ENCODE measurements at regions of chr20 and their contacts with region 1.

Region 1: GRCh38 chr20:7285918-7286556 is 518.6 kb downstream of the BMP2 start:
- DNase-seq: peak; percentile 62
- ATAC-seq: peak; percentile 88
- H3K4me3 Mint-ChIP-seq: no peak overlapping the region
- H3K27ac Mint-ChIP-seq: no peak overlapping the region
- H3K4me1 Mint-ChIP-seq: peaks cover 2% of the 10 kb centered on the region
- H3K27me3 Mint-ChIP-seq: no peaks in the 10 kb centered on the region
- CTCF ChIP-seq: peak; percentile 62

Region 2: DNA sequence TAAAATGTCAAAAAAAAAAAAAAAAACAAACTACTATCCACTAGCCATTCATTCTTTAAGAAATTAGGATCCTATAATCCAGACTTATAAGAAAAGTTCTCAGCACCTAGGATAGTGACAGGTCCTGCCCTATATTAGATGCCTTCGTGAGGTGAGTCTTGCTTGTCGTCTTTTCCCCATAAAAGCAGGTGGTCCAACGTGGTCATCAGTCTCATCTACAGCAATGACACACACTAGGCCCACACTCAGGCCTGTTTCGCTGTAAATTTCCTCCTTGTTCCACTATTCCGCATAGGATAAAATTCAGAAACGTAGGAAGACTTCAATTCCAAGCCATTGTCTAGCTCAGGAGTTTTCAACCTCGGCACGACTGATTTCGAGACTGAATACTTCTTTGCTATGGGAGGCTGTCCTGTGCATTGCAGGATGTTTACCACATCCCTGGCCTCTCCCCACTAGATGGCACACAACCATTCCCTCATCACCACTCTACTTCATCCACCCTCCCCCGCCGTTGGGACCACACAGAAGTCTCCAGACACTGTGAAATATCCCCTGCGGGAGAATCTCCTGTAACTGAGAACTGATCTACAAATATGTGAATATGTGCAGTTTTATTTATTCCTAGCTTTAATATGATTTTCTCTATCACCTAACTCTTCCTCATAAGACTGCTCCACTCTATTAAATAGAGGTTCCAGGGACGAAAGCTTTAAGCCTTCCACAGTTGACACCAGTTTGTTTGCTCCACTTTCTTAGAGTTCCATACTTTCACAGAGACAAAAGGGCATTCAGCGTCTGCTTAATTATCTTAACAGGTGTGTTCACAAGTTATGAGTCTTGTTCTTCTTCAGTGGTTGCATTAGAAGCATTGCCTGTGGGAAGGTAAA is 172.2 kb before region 1 on chr20:
- CTCF ChIA-PET with region 1: interaction called, 25 read pairs
- POLR2A ChIA-PET with region 1: no interaction called
- DNase-seq: peak; percentile 75
- ATAC-seq: peak; percentile 99
- H3K4me3 Mint-ChIP-seq: peak overlapping the region; percentile 6; the same call in 1 of the 2 replicates
- H3K27ac Mint-ChIP-seq: peak overlapping the region; percentile 21; the same call in 1 of the 2 replicates
- H3K4me1 Mint-ChIP-seq: peaks cover 25% of the 10 kb centered on the region
- H3K27me3 Mint-ChIP-seq: no peaks in the 10 kb centered on the region
- CTCF ChIP-seq: no peak

Region 3: GRCh38 chr20:7248281-7249201 is 37.5 kb before region 1 on chr20:
- CTCF ChIA-PET with region 1: interaction called, 10 read pairs
- POLR2A ChIA-PET with region 1: no interaction called
- DNase-seq: no peak
- ATAC-seq: no peak
- H3K4me3 Mint-ChIP-seq: no peak overlapping the region
- H3K27ac Mint-ChIP-seq: no peak overlapping the region
- H3K4me1 Mint-ChIP-seq: peaks cover 12% of the 10 kb centered on the region
- H3K27me3 Mint-ChIP-seq: no peaks in the 10 kb centered on the region
- CTCF ChIP-seq: no peak

Region 4: DNA sequence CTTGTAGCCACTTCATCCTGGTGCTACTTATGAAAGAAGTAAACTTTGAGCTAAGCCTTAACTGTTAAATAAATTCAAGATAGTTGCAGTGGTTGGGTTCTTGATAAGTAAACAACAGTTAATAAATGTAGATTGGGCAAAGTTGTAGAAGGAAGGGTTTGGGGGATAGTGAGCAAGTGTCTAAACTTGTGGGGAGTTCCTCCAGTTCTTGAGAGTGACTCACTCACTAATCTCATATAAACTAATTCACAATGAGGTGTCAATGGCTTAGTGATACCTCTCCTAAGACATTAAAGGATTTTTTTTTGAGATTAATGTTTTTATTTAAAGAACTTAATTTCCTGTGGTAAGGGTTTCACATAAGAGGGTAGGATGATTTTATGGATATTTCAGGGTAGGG is 11.2 kb before region 1 on chr20:
- CTCF ChIA-PET with region 1: interaction called, 10 read pairs
- POLR2A ChIA-PET with region 1: no interaction called
- DNase-seq: no peak
- ATAC-seq: no peak
- H3K4me3 Mint-ChIP-seq: no peak overlapping the region
- H3K27ac Mint-ChIP-seq: no peak overlapping the region
- H3K4me1 Mint-ChIP-seq: no peaks in the 10 kb centered on the region
- H3K27me3 Mint-ChIP-seq: no peaks in the 10 kb centered on the region
- CTCF ChIP-seq: no peak

Region 5: DNA sequence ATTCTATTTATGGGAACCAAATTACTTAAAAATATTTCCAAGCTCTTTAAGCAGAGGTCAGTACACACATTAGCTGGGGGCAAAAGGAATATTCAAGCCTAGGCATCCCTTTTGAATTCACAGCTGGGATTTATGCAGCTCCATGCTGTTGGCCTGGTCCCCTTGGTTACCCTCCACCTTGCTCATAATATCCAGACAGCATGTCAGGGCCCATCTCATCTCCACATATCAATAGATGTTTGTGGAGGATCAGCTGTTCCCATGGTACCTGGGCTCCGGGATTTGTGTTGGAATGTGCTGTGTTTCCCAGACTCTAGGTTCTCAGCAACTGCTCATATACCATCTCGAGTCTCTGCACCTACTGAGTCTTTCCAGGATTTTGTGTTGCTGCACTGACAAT is 16.2 kb after region 1 on chr20:
- CTCF ChIA-PET with region 1: interaction called, 25 read pairs
- POLR2A ChIA-PET with region 1: no interaction called
- DNase-seq: peak; percentile 23
- ATAC-seq: peak; percentile 80
- H3K4me3 Mint-ChIP-seq: no peak overlapping the region
- H3K27ac Mint-ChIP-seq: peak overlapping the region; percentile 26; the same call in 1 of the 2 replicates
- H3K4me1 Mint-ChIP-seq: peaks cover 27% of the 10 kb centered on the region
- H3K27me3 Mint-ChIP-seq: no peaks in the 10 kb centered on the region
- CTCF ChIP-seq: no peak